CD14-positive monocyte (primary cell): ENCODE measurements at regions of chr14 and their contacts with region 1.

Region 1: GRCh38 chr14:65251213-65251612 is 148.9 kb upstream of the MAX start:
- DNase-seq: peak; percentile 27 to 87 (median 74)
- H3K4me3 ChIP-seq: no peak overlapping the region
- H3K4me3 Mint-ChIP-seq: no peak overlapping the region
- H3K27ac ChIP-seq: no peak overlapping the region
- H3K27ac Mint-ChIP-seq: peak overlapping the region in 2 of 7 donors; percentile 0 to 44
- H3K4me1 ChIP-seq: peaks cover 8 to 9% of the 10 kb centered on the region in 2 donors
- H3K4me1 Mint-ChIP-seq: peaks cover 22% of the 10 kb centered on the region
- H3K27me3 ChIP-seq: no peaks in the 10 kb centered on the region
- H3K27me3 Mint-ChIP-seq: peaks cover 2 to 4% (median 2%) of the 10 kb centered on the region in 3 donors
- CTCF ChIP-seq: no peak

Region 2: GRCh38 chr14:65206448-65207096 is 44.6 kb before region 1 on chr14:
- intact Hi-C with region 1: loop called in 1 of 2 experiments (anchors 5 kb)
- DNase-seq: peak; percentile 76 to 91 (median 77)
- H3K4me3 ChIP-seq: peak overlapping the region in 1 of 3 experiments; percentile 33
- H3K4me3 Mint-ChIP-seq: no peak overlapping the region
- H3K27ac ChIP-seq: peak overlapping the region in 1 of 2 donors; percentile 84
- H3K27ac Mint-ChIP-seq: peak overlapping the region; percentile 75 to 92 (median 82)
- H3K4me1 ChIP-seq: peaks cover 63 to 69% of the 10 kb centered on the region in 2 donors
- H3K4me1 Mint-ChIP-seq: peaks cover 63% of the 10 kb centered on the region
- H3K27me3 ChIP-seq: no peaks in the 10 kb centered on the region
- H3K27me3 Mint-ChIP-seq: peaks cover 0 to 3% (median 2%) of the 10 kb centered on the region in 3 donors
- CTCF ChIP-seq: no peak